Calu3 (cell line): ENCODE measurements at regions of chr18 and their contacts with region 1.

Region 1: DNA sequence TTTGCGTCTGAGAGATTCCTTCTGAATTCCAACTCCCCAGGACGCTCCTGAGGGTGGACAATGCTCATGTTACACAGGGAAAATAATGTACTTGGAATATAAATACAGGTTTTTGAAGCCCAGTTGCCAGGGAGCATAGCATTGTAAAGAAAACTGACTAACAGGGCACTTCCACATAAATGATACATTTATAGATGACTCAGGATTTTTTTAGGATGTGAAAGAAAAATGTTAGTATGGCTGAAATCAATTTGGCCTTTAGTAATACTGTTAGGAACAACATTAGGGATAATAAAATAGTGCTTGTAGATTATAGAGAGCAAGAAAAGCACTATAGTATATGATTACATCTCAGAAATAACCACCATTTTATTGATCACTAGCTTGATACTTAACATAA is 23.6 kb downstream of the ZNF397 start:
- DNase-seq: no peak
- H3K4me3 Mint-ChIP-seq: no peak overlapping the region
- H3K27ac Mint-ChIP-seq: no peak overlapping the region
- H3K4me1 Mint-ChIP-seq: no peaks in the 10 kb centered on the region
- H3K27me3 Mint-ChIP-seq: no peaks in the 10 kb centered on the region
- CTCF ChIP-seq: no peak

Region 2: DNA sequence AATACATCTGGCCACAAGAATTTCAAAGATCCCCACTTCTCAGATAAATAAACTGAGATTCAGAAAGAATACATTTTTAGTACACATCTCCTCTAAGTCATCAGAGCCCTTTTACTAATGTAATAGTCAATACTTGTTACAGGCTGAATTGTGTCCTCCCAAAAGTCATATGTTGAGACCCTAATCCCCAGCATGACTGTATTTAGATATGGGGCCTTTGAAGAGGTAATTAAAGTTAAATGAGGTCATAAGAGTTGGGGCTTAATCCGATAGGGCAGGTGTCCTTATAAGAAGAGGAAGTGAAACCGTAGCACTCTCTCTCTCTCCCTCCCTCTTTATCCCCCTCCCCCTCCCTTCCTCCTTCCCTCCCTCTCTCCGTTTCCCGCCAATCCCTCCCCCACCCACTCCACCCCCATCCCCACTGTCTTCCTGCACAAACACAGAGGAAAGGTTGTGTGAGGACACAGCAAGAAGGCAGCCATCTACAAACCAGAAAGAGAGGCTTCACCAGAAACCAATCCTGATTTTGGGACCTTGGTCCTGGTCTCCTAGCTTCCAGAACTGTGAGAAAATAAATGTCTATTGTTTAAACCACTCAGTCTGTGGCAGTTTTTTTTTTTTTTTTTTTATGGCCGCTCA is 90.2 kb before region 1 on chr18:
- CTCF ChIA-PET with region 1: interaction called, 10 read pairs
- intact Hi-C with region 1: no loop called
- DNase-seq: no peak
- H3K4me3 Mint-ChIP-seq: no peak overlapping the region
- H3K27ac Mint-ChIP-seq: no peak overlapping the region
- H3K4me1 Mint-ChIP-seq: peaks cover 15% of the 10 kb centered on the region
- H3K27me3 Mint-ChIP-seq: no peaks in the 10 kb centered on the region
- CTCF ChIP-seq: no peak